B cell (primary cell): ENCODE measurements at regions of chr1 and their contacts with region 1.

Region 1: GRCh38 chr1:40153073-40153770 is 8.0 kb upstream of the RLF start:
- DNase-seq: peak; percentile 83
- ATAC-seq: peak; percentile 79
- H3K4me3 ChIP-seq: peak overlapping the region in 4 of 5 experiments; percentile 29 to 60 (median 31)
- H3K4me3 Mint-ChIP-seq: peak overlapping the region; percentile 80
- H3K27ac ChIP-seq: peak overlapping the region; percentile 79 to 82
- H3K27ac Mint-ChIP-seq: peak overlapping the region; percentile 95
- H3K4me1 ChIP-seq: peaks cover 21 to 22% of the 10 kb centered on the region in 2 donors
- H3K4me1 Mint-ChIP-seq: peaks cover 25% of the 10 kb centered on the region
- H3K27me3 ChIP-seq: no peaks in the 10 kb centered on the region
- H3K27me3 Mint-ChIP-seq: no peaks in the 10 kb centered on the region
- CTCF ChIP-seq: peak; percentile 82

Region 2: DNA sequence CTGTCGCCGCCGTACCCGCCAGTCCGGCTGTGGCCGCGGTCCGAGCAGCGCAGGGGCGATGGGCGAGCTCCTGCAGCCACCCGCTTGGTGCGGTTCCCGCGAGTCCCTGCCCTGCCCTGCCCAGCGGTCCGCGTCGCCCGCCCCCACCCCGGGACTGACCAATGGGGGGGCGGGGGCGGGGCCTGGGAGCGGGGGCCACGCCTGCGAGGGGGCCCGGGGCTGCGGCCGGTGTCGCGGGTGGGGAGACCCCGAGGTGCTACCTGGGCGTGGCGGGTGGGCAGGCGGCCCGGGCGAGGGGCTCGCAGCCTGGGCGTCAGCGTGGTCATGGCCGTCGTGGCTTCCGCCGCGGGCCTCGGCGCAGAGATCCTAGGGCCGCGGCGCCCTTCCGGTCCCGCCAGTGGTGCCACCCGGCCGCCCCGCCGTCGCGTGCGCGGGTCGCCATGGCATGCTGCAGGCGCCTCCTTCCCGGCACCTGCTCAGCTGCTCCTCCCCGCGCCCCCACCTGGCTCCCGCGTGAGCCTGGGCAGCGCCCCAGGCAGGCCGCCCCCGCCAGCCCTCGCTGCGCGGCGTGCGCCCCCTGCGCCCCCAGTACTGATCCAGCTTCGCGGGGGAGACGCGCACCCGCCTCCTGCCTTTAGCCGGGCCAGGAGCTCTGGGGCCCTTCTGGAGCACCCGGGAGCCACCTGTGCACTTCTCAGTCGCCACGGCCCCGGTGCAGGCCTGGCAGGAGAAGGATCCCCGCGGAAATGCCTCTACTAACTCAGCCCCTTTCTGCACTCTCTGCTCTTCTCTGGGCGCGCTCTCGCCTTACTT is 364.3 kb before region 1 on chr1 and contains the start of gene BMP8B:
- CTCF ChIA-PET with region 1: no interaction called
- POLR2A ChIA-PET with region 1: no interaction called
- intact Hi-C with region 1: no loop called
- DNase-seq: peak; percentile 77
- ATAC-seq: peak; percentile 86
- H3K4me3 ChIP-seq: peak within 1 kb of the TSS in 4 of 5 experiments; percentile 29 to 65 (median 54)
- H3K4me3 Mint-ChIP-seq: peak within 1 kb of the TSS; percentile 87
- H3K27ac ChIP-seq: no peak within 1 kb of the TSS
- H3K27ac Mint-ChIP-seq: peak within 1 kb of the TSS; percentile 86
- H3K4me1 ChIP-seq: peaks cover 5 to 7% of the 10 kb centered on the region in 2 donors
- H3K4me1 Mint-ChIP-seq: peaks cover 26% of the 10 kb centered on the region
- H3K27me3 ChIP-seq: peaks cover 0 to 16% (median 0%) of the 10 kb centered on the region in 4 experiments
- H3K27me3 Mint-ChIP-seq: peaks cover 15% of the 10 kb centered on the region
- CTCF ChIP-seq: no peak
- total RNA-seq, gene BMP8B: 2.3 and 2.5 TPM in 2 replicates

Region 3: DNA sequence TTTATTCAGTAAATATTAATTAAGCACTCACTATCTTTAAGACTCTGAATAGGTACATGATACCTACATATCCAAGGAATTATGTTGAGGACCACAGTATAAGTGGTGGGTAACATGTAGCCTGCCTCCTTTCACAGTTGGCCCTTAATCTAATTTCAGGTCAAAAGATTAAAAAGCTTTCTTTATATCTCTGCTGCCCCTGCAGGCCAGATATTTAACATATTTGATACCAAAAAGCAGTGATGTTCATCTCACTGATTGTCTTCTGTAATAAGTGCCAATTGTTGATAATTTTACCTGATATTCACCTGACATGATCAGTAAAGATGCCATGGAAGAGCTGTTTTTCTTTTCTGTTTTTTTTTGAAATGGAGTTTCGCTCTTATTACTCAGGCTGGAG is 44.4 kb after region 1 on chr1:
- CTCF ChIA-PET with region 1: interaction called, 7 read pairs
- POLR2A ChIA-PET with region 1: no interaction called
- intact Hi-C with region 1: loop called (anchors 1 kb)
- DNase-seq: peak; percentile 25
- ATAC-seq: no peak
- H3K4me3 ChIP-seq: no peak overlapping the region
- H3K4me3 Mint-ChIP-seq: no peak overlapping the region
- H3K27ac ChIP-seq: no peak overlapping the region
- H3K27ac Mint-ChIP-seq: no peak overlapping the region
- H3K4me1 ChIP-seq: no peaks in the 10 kb centered on the region
- H3K4me1 Mint-ChIP-seq: no peaks in the 10 kb centered on the region
- H3K27me3 ChIP-seq: no peaks in the 10 kb centered on the region
- H3K27me3 Mint-ChIP-seq: no peaks in the 10 kb centered on the region
- CTCF ChIP-seq: peak; percentile 54

Region 4: DNA sequence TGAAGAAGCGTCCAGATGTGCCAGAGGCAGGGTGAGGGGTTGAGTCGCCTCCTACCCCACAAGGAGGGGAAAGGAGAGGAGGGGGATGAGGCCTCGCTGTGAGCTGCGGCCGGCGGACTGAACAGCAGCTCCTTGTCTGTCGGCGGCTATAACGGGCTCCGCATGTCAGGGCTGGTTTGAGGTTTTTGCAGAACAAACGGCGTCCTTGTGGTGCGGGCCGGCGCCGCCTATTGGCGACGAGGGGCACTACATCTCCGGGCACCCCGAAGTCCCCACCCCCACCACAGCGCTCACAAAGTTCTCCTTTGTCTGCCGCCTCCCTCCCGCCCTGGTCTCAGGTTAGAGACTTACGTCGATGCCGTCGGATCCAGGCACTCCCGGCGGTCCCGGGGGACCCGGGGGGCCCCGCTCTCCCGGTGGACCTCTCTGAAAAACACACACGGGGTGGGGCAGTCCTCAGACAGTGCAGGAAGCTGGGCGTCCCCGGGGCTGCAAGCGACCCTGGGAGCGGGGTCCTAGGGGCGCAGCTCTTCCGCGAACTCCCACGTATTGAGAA is 162.1 kb after region 1 on chr1:
- CTCF ChIA-PET with region 1: interaction called, 67 read pairs
- POLR2A ChIA-PET with region 1: interaction called, 9 read pairs
- intact Hi-C with region 1: loop called (anchors 2 kb)
- DNase-seq: peak; percentile 94
- ATAC-seq: peak; percentile 61
- H3K4me3 ChIP-seq: peak overlapping the region; percentile 43 to 78 (median 66)
- H3K4me3 Mint-ChIP-seq: peak overlapping the region; percentile 92
- H3K27ac ChIP-seq: peak overlapping the region in 1 of 2 donors; percentile 40
- H3K27ac Mint-ChIP-seq: peak overlapping the region; percentile 76
- H3K4me1 ChIP-seq: peaks cover 41 to 59% of the 10 kb centered on the region in 2 donors
- H3K4me1 Mint-ChIP-seq: peaks cover 57% of the 10 kb centered on the region
- H3K27me3 ChIP-seq: peaks cover 0 to 3% (median 1%) of the 10 kb centered on the region in 4 experiments
- H3K27me3 Mint-ChIP-seq: peaks cover 5% of the 10 kb centered on the region
- CTCF ChIP-seq: peak; percentile 95

Region 5: DNA sequence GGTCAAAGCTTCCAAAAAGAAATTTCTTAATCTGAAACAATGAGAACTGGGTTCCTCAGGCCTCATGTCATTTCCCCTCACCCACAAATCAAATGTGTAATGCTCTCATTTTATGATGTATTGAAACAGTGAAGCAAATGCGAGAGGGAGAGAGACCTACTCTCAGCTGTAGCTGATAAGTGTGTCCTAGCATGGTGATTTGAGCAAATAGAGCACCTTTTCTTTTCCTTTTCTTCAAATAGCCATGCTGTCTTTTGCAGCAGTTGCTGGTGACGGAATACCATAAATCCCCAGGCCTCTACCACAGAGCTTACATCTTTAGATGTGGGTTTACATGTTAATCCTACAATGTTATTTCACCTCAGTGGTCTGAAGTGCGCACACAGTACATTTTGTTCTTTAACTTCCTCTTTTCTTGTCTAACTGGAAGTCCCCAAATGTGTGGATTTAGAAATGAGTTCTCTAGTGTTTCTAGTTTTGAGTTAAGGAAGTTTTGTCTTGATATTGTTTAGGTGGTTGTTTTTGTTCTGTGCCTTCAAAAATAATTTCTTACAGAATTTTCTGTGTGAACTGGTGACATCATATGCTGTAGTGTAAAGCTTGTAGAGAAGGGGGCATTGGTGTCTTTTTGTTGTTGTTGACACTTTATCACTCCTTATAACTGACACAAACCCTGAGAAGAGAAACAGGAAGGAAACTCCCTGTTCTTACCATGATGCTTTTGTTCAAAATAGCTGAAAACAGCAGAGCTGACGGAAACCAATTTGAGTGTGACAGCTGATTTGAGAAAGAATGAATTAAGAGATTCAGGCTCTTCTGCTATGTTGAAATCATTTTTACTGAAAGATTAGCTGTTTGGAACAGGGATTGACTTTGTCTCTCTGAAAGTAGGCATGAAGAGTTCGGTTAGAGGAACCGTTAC is 232.5 kb after region 1 on chr1:
- CTCF ChIA-PET with region 1: interaction called, 27 read pairs
- POLR2A ChIA-PET with region 1: no interaction called
- intact Hi-C with region 1: no loop called
- DNase-seq: peak; percentile 94
- ATAC-seq: peak; percentile 73
- H3K4me3 ChIP-seq: peak overlapping the region; percentile 30 to 70 (median 31)
- H3K4me3 Mint-ChIP-seq: peak overlapping the region; percentile 87
- H3K27ac ChIP-seq: peak overlapping the region; percentile 99 to 100
- H3K27ac Mint-ChIP-seq: peak overlapping the region; percentile 97
- H3K4me1 ChIP-seq: peaks cover 94 to 98% of the 10 kb centered on the region in 2 donors
- H3K4me1 Mint-ChIP-seq: peaks cover 91% of the 10 kb centered on the region
- H3K27me3 ChIP-seq: no peaks in the 10 kb centered on the region
- H3K27me3 Mint-ChIP-seq: no peaks in the 10 kb centered on the region
- CTCF ChIP-seq: no peak

Region 6: DNA sequence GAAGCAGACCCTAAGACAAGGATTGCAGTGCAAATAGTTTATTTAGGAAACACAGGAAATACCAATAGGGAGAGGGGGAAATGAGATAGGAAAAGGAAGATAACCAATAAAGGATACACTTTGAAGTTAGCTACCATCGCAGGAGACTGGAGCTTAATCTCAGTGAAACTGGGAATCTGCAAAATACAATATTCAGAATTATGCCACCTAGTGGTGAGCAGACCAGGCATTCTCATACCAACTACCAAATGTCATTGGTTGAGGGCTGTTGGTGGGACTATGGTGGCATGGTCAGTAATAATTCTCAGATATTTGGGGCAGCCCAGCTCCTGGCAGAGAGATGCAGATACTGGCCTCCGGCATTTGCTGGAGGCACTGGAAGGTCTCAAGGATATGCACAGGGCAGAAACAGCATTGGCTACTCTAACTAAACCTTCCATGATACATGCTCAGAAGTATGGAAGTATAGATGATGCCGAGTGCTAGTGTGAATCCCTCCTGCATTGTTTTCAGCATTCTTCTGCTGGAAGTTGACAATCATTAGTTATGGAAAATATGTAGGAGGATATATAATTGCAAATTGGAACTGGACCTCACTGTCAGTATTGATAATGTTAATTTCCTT is 285.3 kb after region 1 on chr1:
- CTCF ChIA-PET with region 1: interaction called, 53 read pairs
- POLR2A ChIA-PET with region 1: no interaction called
- intact Hi-C with region 1: no loop called
- DNase-seq: peak; percentile 63
- ATAC-seq: peak; percentile 64
- H3K4me3 ChIP-seq: no peak overlapping the region
- H3K4me3 Mint-ChIP-seq: no peak overlapping the region
- H3K27ac ChIP-seq: no peak overlapping the region
- H3K27ac Mint-ChIP-seq: no peak overlapping the region
- H3K4me1 ChIP-seq: no peaks in the 10 kb centered on the region
- H3K4me1 Mint-ChIP-seq: peaks cover 2% of the 10 kb centered on the region
- H3K27me3 ChIP-seq: no peaks in the 10 kb centered on the region
- H3K27me3 Mint-ChIP-seq: no peaks in the 10 kb centered on the region
- CTCF ChIP-seq: peak; percentile 83